ENCODE measurements at regions of chr1 and their contacts with region 1.

Region 1: DNA sequence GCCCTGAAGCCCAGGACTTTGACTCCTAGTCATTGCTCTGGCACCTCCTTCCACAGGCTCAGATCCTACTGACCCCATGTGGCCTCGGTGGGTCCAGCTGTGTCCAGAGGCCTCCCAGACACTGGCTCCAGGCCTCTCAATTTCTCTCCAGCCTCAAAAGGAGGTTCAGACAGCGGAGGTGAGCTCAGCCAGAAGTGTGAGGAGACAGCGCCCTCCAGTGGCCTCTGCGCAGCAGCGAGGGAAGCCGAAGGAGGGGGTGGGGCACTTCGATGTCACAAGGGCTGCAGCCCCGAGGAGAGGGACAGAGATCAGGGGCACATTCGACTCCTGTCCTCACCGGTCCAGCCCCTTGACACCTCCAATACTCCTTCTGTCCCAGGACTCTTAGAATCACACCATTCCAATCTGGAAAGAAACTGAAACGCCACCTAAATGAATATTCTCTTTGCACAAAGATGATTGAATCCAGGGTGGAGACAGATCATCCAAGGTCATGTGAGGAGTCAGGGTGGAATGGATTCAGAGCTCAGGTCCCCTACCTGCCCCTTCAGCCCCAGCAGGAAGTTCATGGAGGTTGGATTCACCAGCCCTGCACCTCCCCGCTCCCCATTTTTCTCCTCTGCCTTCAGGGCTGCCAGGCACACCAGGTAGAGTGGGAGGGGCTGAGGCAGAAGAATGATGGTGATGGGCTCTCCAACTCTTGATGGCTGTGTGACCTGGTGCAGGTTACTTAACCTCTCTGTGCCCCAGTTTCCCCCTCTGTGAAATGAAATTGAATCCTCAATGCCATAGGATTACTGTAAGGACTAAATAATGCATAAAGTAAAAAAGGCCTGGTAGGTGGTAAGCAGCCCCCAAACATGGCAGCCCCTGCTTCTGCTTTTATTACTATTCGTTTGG is 34.8 kb upstream of the ZBTB40 start:
- DNase-seq: peak; percentile 70 to 88 (median 80)
- H3K4me3 ChIP-seq: no peak overlapping the region
- H3K27ac ChIP-seq: no peak overlapping the region
- H3K4me1 ChIP-seq: no peaks in the 10 kb centered on the region
- H3K27me3 ChIP-seq: no peaks in the 10 kb centered on the region
- CTCF ChIP-seq: peak; percentile 73 to 94 (median 75)
- EP300 ChIP-seq: no peak
- POLR2A ChIP-seq: no peak

Region 2: GRCh38 chr1:22452475-22452957 is 35.7 kb after region 1 on chr1:
- intact Hi-C with region 1: no loop called
- DNase-seq: peak in 3 of 5 donors; percentile 43 to 53 (median 44)
- H3K4me3 ChIP-seq: peak overlapping the region; percentile 86
- H3K27ac ChIP-seq: peak overlapping the region; percentile 87 to 93
- H3K4me1 ChIP-seq: peaks cover 8% of the 10 kb centered on the region
- H3K27me3 ChIP-seq: no peaks in the 10 kb centered on the region
- CTCF ChIP-seq: no peak
- EP300 ChIP-seq: no peak
- POLR2A ChIP-seq: no peak

Region 3: GRCh38 chr1:22557341-22557950 is 140.6 kb after region 1 on chr1:
- intact Hi-C with region 1: loop called in 1 of 4 experiments (anchors 10 kb)
- DNase-seq: no peak
- H3K4me3 ChIP-seq: no peak overlapping the region
- H3K27ac ChIP-seq: no peak overlapping the region
- H3K4me1 ChIP-seq: no peaks in the 10 kb centered on the region
- H3K27me3 ChIP-seq: no peaks in the 10 kb centered on the region
- CTCF ChIP-seq: no peak
- EP300 ChIP-seq: no peak
- POLR2A ChIP-seq: no peak

Region 4: GRCh38 chr1:22641906-22642636 is 225.3 kb after region 1 on chr1:
- intact Hi-C with region 1: loop called (anchors 2 to 5 kb)
- DNase-seq: peak; percentile 79 to 92 (median 90)
- H3K4me3 ChIP-seq: no peak overlapping the region
- H3K27ac ChIP-seq: no peak overlapping the region
- H3K4me1 ChIP-seq: peaks cover 3% of the 10 kb centered on the region
- H3K27me3 ChIP-seq: no peaks in the 10 kb centered on the region
- CTCF ChIP-seq: peak; percentile 75 to 82 (median 79)
- EP300 ChIP-seq: no peak
- POLR2A ChIP-seq: no peak

Measured in ovary (tissue), 10 donors.